ENCODE measurements at regions of chr19 and their contacts with region 1.

Region 1: DNA sequence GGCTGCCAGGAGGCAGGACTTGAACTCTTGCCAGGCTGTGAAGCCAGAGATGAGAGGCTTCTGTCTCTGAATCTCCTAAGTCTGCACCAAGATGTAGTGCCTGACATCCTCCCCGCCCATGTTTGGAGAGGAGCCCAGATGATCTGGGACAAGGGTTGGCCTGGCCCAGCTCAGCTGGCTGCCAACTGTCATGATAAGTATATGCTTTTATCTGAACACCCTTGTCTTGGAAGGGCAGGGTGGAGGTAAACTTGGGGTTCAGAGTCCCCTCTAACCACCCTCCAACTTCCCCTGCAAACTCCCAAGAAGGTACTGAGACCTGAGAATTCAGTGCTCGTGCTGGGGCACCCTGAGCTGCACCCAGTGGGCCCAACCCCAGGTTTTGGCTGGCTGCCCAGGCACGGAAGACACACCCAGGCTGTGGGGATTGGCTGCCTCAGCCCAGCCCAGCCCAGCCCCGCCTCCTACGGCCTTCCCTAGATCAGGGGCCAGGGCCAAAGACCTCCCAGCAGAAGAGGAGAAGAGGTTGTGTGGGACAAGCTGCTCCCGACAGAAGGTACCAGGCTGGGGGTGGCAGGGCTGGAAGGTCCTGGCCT is at the start of gene CYP4F12:
- DNase-seq: peak; percentile 10
- H3K4me3 ChIP-seq: no peak within 1 kb of the TSS
- H3K27ac ChIP-seq: no peak within 1 kb of the TSS
- H3K4me1 ChIP-seq: no peaks in the 10 kb centered on the region
- H3K27me3 ChIP-seq: no peaks in the 10 kb centered on the region
- total RNA-seq, gene CYP4F12: not detected in 2 replicates

Region 2: GRCh38 chr19:15779756-15780476 is 107.2 kb after region 1 on chr19:
- in situ Hi-C with region 1: loop called (anchors 5 kb)
- DNase-seq: peak; percentile 24
- H3K4me3 ChIP-seq: no peak overlapping the region
- H3K27ac ChIP-seq: no peak overlapping the region
- H3K4me1 ChIP-seq: no peaks in the 10 kb centered on the region
- H3K27me3 ChIP-seq: no peaks in the 10 kb centered on the region

Region 3: GRCh38 chr19:15911599-15912235 is 239.0 kb after region 1 on chr19:
- in situ Hi-C with region 1: no loop called
- DNase-seq: no peak
- H3K4me3 ChIP-seq: no peak overlapping the region
- H3K27ac ChIP-seq: no peak overlapping the region
- H3K4me1 ChIP-seq: no peaks in the 10 kb centered on the region
- H3K27me3 ChIP-seq: peaks cover 5% of the 10 kb centered on the region; the same call in 1 of the 2 replicates